ENCODE measurements at regions of chr16 and their contacts with region 1.

Region 1: GRCh38 chr16:68689925-68690324 is 44.8 kb downstream of the CDH3 start:
- DNase-seq: no peak
- H3K4me3 ChIP-seq: no peak overlapping the region
- H3K27ac ChIP-seq: no peak overlapping the region
- H3K4me1 ChIP-seq: no peaks in the 10 kb centered on the region
- H3K27me3 ChIP-seq: no peaks in the 10 kb centered on the region
- CTCF ChIP-seq: no peak

Region 2: DNA sequence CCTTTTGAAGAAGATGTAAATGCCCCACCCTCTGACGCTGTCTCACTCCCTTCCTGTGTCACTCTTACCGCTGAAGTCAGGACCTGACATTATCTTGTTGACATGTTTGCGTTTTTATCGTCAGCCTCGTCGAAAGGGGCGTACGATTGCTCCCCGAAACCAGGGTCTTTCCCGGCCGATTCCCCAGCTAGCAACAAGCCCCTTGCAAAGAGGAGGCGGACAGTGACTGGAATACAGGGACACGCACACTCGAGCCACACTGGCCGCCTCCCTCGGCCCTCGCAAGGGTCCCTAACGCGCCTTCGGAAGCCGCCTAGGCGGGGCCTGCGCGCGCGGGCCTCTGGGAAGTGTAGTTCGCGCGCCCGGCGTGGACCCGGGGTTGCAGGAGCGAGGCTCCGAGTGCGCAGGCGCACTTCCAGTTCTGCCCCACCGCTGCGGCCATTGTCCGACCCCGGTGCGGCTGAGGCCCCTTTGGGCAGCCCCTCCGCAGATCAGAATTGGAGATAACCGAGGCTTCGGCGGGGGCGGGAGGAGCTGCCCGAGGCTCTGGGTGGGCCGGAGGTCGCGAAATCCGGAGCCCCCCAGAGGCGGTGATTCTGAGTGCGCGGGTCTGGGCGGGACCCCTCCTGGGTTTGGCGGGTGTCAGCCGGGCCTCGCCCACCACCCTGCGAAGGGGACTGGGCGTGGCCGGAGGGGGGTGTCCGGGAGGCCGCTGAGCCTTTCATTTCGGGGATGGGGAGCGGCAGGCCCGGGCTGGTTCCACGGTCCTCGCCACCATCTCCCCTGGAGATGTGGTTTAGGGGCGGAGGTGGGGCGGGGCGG is 150.8 kb before region 1 on chr16 and contains the start of gene ZFP90:
- CTCF ChIA-PET with region 1: no interaction called
- POLR2A ChIA-PET with region 1: interaction called, 10 read pairs
- intact Hi-C with region 1: no loop called
- DNase-seq: peak; percentile 46 to 76
- H3K4me3 ChIP-seq: peak within 1 kb of the TSS; percentile 79
- H3K27ac ChIP-seq: no peak within 1 kb of the TSS
- H3K4me1 ChIP-seq: no peaks in the 10 kb centered on the region
- H3K27me3 ChIP-seq: no peaks in the 10 kb centered on the region
- CTCF ChIP-seq: no peak
- total RNA-seq, gene ZFP90: 14.5 and 20.5 TPM in 2 replicates